ENCODE measurements at regions of chr20 and their contacts with region 1.

Region 1: GRCh38 chr20:45322952-45323383 is 14.9 kb upstream of the MATN4 start:
- DNase-seq: no peak
- H3K4me3 Mint-ChIP-seq: no peak overlapping the region
- H3K27ac Mint-ChIP-seq: no peak overlapping the region
- H3K4me1 Mint-ChIP-seq: peaks cover 26% of the 10 kb centered on the region
- H3K27me3 Mint-ChIP-seq: no peaks in the 10 kb centered on the region

Region 2: GRCh38 chr20:45254869-45255266 is 68.1 kb before region 1 on chr20:
- CTCF ChIA-PET with region 1: no interaction called
- POLR2A ChIA-PET with region 1: no interaction called
- intact Hi-C with region 1: no loop called
- DNase-seq: no peak
- H3K4me3 Mint-ChIP-seq: no peak overlapping the region
- H3K27ac Mint-ChIP-seq: no peak overlapping the region
- H3K4me1 Mint-ChIP-seq: no peaks in the 10 kb centered on the region
- H3K27me3 Mint-ChIP-seq: peaks cover 27% of the 10 kb centered on the region

Region 3: DNA sequence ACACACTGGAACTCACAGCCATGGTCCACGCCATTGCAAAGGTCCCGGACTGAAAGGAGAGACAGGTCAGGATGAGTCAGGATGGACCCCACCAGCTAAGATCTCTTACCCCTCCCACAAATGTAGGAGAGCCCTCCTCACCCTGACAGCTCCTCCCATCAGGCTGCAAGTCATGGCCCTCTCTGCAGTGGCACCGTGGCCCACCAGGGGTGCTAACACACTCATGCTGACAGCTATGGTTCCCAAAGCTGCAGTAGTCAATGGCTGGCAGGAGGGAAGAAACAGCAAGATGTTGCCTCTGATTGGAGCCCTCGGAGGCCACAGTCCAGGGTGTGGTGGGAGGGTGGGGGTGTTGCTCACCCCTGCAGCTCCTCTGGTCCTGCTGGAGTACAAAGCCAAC is 22.0 kb before region 1 on chr20:
- CTCF ChIA-PET with region 1: interaction called, 26 read pairs
- POLR2A ChIA-PET with region 1: interaction called, 3 read pairs
- intact Hi-C with region 1: no loop called
- DNase-seq: peak; percentile 71
- H3K4me3 Mint-ChIP-seq: no peak overlapping the region
- H3K27ac Mint-ChIP-seq: no peak overlapping the region
- H3K4me1 Mint-ChIP-seq: peaks cover 32% of the 10 kb centered on the region
- H3K27me3 Mint-ChIP-seq: peaks cover 35% of the 10 kb centered on the region

Region 4: GRCh38 chr20:45311589-45312211 is 11.3 kb before region 1 on chr20:
- CTCF ChIA-PET with region 1: interaction called, 10 read pairs
- POLR2A ChIA-PET with region 1: interaction called, 4 read pairs
- intact Hi-C with region 1: no loop called
- DNase-seq: peak; percentile 78
- H3K4me3 Mint-ChIP-seq: no peak overlapping the region
- H3K27ac Mint-ChIP-seq: no peak overlapping the region
- H3K4me1 Mint-ChIP-seq: peaks cover 8% of the 10 kb centered on the region
- H3K27me3 Mint-ChIP-seq: peaks cover 32% of the 10 kb centered on the region

Region 5: GRCh38 chr20:45347936-45348778 is 25.2 kb after region 1 on chr20 and contains the start of gene SDC4:
- CTCF ChIA-PET with region 1: no interaction called
- POLR2A ChIA-PET with region 1: no interaction called
- intact Hi-C with region 1: loop called (anchors 2 kb)
- DNase-seq: peak; percentile 76
- H3K4me3 Mint-ChIP-seq: peak within 1 kb of the TSS; percentile 86
- H3K27ac Mint-ChIP-seq: peak within 1 kb of the TSS; percentile 76
- H3K4me1 Mint-ChIP-seq: peaks cover 43% of the 10 kb centered on the region
- H3K27me3 Mint-ChIP-seq: no peaks in the 10 kb centered on the region
- total RNA-seq, gene SDC4: 67.8 to 69.8 TPM

Region 6: GRCh38 chr20:45450097-45450818 is 127.3 kb after region 1 on chr20:
- CTCF ChIA-PET with region 1: interaction called, 64 read pairs
- POLR2A ChIA-PET with region 1: no interaction called
- intact Hi-C with region 1: loop called (anchors 1 kb)
- DNase-seq: no peak
- H3K4me3 Mint-ChIP-seq: no peak overlapping the region
- H3K27ac Mint-ChIP-seq: no peak overlapping the region
- H3K4me1 Mint-ChIP-seq: no peaks in the 10 kb centered on the region
- H3K27me3 Mint-ChIP-seq: peaks cover 3% of the 10 kb centered on the region